ENCODE measurements at regions of chr12 and their contacts with region 1.

Region 1: GRCh38 chr12:26309646-26310045 is 114.3 kb downstream of the SSPN start:
- DNase-seq: no peak
- ATAC-seq: no peak

Region 2: GRCh38 chr12:25875666-25876065 is 434.0 kb before region 1 on chr12:
- intact Hi-C with region 1: loop called (anchors 10 kb)
- DNase-seq: no peak
- ATAC-seq: no peak